Tibial artery (tissue), 4 donors: ENCODE measurements at regions of chr1 and their contacts with region 1.

Region 1: DNA sequence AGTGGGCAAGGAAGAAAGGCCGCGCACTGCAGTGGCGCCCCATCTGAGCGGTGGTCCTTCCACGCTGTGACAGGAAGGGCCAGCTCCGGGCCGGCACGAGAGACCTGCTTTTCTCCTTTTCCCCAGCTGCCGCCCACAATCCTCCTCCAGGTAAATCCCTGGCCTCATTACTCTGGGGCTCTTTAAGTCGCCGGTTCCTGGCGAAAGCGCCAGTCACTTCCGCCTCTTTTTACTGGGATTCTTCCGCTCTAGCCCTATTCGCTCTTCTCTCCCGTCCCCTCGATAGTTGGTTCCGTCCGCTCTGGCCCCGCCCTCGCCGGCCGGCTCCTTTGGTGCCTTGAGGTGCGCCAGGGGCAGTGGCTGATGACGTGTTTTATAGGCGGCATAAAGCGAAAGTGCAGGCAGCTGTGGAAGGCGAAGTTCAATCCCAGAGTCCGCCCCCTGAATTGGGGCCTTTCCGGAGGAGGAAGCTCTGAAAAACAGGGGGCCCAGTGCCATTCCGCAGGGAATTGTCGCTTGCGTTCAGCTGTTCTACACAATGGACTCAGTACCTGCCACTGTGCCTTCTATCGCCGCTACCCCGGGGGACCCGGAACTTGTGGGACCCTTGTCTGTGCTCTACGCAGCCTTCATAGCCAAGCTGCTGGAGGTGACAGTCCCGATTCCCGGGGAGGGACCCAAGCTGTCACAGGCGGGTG is 26.2 kb downstream of the MIA3 start:
- DNase-seq: peak; percentile 97 to 99
- H3K4me3 ChIP-seq: peak overlapping the region; percentile 91 to 95
- H3K27ac ChIP-seq: peak overlapping the region; percentile 89 to 93
- H3K4me1 ChIP-seq: peaks cover 0 to 15% (median 8%) of the 10 kb centered on the region in 4 donors
- H3K27me3 ChIP-seq: no peaks in the 10 kb centered on the region
- CTCF ChIP-seq: no peak

Region 2: DNA sequence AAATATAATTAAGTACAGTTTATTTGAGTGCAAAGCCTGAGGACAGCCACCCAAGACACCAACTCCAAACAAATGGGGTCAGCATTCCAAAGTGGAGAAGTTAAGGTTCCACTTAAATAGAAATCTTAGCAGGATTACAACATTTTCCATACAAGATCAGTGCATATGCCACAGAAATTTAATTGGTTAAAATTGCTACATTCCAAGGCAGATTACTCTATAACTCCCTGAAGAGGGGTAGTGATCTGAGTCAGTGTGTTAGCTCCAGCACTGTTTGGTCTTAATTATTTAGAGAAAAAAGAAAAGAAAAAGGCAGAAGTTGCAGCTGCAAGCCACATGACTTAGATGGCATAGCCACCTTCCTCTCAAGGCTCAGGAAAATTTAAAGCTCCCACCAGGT is 393.7 kb before region 1 on chr1:
- intact Hi-C with region 1: no loop called
- DNase-seq: no peak
- H3K4me3 ChIP-seq: no peak overlapping the region
- H3K27ac ChIP-seq: no peak overlapping the region
- H3K4me1 ChIP-seq: no peaks in the 10 kb centered on the region
- H3K27me3 ChIP-seq: no peaks in the 10 kb centered on the region
- CTCF ChIP-seq: no peak

Region 3: GRCh38 chr1:222713091-222713961 is 69.2 kb after region 1 on chr1:
- intact Hi-C with region 1: loop called (anchors 10 kb)
- DNase-seq: peak; percentile 96 to 98
- H3K4me3 ChIP-seq: peak overlapping the region; percentile 67 to 74
- H3K27ac ChIP-seq: peak overlapping the region; percentile 95
- H3K4me1 ChIP-seq: peaks cover 0 to 35% (median 19%) of the 10 kb centered on the region in 4 donors
- H3K27me3 ChIP-seq: no peaks in the 10 kb centered on the region
- CTCF ChIP-seq: no peak